AG04449 (cell line): ENCODE measurements at regions of chr19 and their contacts with region 1.

Region 1: DNA sequence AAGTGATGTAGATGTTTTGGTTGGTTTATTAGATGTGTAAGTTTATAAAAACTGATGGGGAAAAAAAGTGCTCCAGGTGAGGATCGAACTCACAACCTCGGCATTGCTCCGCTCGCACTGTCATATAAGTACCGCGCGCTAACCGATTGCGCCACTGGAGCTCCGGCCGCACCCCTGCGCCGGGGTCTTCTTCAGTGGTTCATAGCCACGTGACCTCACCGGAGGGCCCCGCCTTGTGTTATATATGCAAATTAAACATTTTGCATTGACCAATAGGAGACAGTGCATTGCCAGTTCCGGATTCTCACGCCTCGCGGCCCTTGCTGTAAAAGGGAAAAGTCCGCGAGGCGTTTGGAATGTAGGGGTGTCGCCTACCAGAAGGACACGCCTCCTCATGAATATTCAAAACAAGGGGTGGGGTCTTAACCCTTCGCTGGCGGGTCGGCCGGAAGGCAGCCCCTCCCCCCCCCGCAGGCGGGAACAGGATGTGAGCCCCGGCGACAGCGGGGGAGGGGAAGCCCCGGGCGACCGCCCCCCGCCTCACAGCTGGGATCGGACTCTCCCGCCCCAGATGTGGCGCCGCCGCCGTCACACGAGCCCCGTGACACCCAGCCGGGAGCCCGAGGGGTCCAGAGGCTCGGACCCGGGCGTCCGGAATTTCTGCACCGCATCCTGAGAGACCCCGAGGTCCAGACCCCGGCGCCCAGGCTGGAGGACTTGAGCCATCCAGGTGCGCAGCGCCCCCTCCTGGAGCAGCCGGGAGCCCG is at the start of gene PLEKHG2:
- DNase-seq: peak; percentile 99
- H3K4me3 ChIP-seq: peak within 1 kb of the TSS; percentile 87
- CTCF ChIP-seq: peak; percentile 84

Region 2: DNA sequence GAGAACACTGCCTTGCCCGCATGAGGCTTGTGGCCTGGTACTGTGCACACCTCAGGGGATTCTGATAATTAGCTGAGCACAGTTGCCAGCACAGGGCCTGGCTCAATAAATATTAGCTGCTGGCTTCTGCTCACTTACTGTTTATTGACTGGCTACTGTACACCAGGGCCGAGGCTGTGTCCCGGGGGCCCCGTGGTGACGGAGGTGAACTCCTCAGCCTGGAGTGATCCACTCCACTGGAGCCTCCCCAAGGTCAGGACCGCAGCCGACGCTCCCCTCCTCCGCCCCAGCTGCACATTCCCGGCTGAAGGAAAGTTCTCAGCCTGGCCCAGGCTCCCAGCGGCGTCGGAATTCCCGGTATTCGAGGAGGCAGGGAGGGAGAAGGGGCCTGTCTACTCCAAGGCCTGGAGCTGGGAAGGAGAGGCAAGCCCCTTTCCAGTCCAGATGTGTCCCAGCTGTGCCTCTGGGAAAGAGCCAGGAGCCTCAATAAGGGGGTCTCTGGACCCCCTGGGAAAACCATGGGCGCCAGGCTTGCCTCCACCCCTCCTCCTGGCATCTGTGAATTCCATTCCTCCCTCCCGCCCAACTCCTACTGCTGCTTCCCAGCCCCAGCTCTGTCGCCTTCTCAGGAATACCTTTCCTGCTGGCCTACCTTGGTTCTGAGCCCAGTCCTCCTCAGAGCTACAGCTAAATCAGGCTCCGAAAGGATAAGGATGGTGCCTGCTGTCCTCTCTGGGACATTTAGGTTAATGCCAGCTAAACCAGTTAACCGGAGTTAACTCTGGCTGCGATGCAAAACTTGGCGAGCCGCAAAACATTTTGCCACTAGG is 16.2 kb after region 1 on chr19:
- CTCF ChIA-PET with region 1: interaction called, 26 read pairs
- POLR2A ChIA-PET with region 1: interaction called, 16 read pairs
- DNase-seq: no peak
- H3K4me3 ChIP-seq: peak overlapping the region; percentile 2; the same call in 1 of the 2 replicates
- CTCF ChIP-seq: no peak